WTC11 (cell line): ENCODE measurements at regions of chr3 and their contacts with region 1.

Region 1: DNA sequence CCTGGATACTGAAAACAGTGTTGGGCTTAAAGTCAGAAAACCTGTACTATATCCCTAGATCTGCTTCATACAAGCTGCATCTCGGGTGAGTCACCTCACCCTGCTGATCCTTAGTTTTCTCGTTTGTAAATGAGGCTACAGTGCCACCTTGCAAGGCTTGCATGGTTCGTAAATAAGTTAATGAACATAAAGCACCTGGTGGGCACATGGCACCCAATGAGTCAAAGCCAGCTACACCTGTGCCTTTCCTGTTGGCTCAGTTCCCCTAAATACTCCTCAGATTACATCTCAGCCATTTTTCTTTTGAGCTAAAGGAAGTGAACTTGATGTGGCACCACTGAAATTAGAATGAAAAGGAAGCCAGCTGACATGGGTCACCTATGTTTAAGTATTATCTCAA is 26.5 kb downstream of the RTP1 start:
- DNase-seq: no peak
- ATAC-seq: no peak
- H3K4me3 Mint-ChIP-seq: no peak overlapping the region
- H3K27ac Mint-ChIP-seq: no peak overlapping the region
- H3K4me1 Mint-ChIP-seq: peaks cover 15% of the 10 kb centered on the region
- H3K27me3 Mint-ChIP-seq: peaks cover 4% of the 10 kb centered on the region; the same call in 1 of the 2 replicates
- CTCF ChIP-seq: no peak

Region 2: DNA sequence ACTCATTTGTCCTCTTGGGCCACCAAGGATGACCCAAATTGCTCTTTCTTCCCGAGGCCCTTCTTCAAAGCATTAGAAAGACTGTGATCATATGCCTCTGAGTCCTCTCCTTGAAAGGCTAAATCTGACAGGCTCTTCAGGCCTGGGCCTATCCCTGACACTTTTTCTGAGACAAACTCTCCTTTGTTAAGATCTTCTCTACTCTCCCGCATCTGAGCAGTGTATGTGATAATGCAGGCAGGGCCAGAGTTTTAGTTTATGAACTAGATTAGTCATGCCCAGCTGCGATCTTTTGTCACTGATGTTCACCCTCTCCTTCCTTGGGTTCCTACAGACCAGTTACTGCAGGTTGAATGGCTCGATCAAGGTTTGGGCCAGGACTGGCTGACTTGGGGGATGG is 28.5 kb after region 1 on chr3:
- CTCF ChIA-PET with region 1: interaction called, 13 read pairs
- POLR2A ChIA-PET with region 1: interaction called, 3 read pairs
- DNase-seq: no peak
- ATAC-seq: no peak
- H3K4me3 Mint-ChIP-seq: no peak overlapping the region
- H3K27ac Mint-ChIP-seq: no peak overlapping the region
- H3K4me1 Mint-ChIP-seq: peaks cover 24% of the 10 kb centered on the region
- H3K27me3 Mint-ChIP-seq: no peaks in the 10 kb centered on the region; the same call in 1 of the 2 replicates
- CTCF ChIP-seq: no peak

Region 3: DNA sequence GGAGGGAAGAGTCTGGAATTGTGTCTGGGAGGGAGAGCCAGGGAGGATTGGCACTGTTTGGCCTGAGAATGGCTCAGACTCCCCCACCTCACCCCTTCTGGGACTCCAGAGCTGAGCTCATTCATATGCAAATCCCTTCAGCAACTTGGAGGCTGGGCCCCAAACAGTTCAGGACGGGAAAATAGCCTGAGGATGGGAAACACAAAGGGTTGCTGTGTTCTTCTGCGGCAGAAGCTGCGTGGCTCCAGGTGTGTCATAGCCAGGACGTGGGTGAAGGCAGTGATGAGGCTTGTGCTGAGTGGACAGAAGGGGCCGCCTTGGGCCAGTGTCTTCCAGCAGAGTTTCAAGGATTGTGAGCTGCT is 51.2 kb after region 1 on chr3:
- CTCF ChIA-PET with region 1: interaction called, 35 read pairs
- POLR2A ChIA-PET with region 1: interaction called, 3 read pairs
- DNase-seq: peak; percentile 77
- ATAC-seq: peak; percentile 99
- H3K4me3 Mint-ChIP-seq: peak overlapping the region; percentile 28; the same call in 1 of the 2 replicates
- H3K27ac Mint-ChIP-seq: peak overlapping the region; percentile 87
- H3K4me1 Mint-ChIP-seq: peaks cover 39% of the 10 kb centered on the region
- H3K27me3 Mint-ChIP-seq: no peaks in the 10 kb centered on the region
- CTCF ChIP-seq: no peak

Region 4: GRCh38 chr3:187305881-187306280 is 82.1 kb after region 1 on chr3:
- CTCF ChIA-PET with region 1: interaction called, 23 read pairs
- POLR2A ChIA-PET with region 1: no interaction called
- DNase-seq: no peak
- ATAC-seq: peak; percentile 48; the same call in 1 of the 2 replicates
- H3K4me3 Mint-ChIP-seq: no peak overlapping the region
- H3K27ac Mint-ChIP-seq: no peak overlapping the region
- H3K4me1 Mint-ChIP-seq: peaks cover 8% of the 10 kb centered on the region
- H3K27me3 Mint-ChIP-seq: no peaks in the 10 kb centered on the region
- CTCF ChIP-seq: no peak